Endothelial cell of umbilical vein (primary cell): ENCODE measurements at regions of chr12 and their contacts with region 1.

Region 1: DNA sequence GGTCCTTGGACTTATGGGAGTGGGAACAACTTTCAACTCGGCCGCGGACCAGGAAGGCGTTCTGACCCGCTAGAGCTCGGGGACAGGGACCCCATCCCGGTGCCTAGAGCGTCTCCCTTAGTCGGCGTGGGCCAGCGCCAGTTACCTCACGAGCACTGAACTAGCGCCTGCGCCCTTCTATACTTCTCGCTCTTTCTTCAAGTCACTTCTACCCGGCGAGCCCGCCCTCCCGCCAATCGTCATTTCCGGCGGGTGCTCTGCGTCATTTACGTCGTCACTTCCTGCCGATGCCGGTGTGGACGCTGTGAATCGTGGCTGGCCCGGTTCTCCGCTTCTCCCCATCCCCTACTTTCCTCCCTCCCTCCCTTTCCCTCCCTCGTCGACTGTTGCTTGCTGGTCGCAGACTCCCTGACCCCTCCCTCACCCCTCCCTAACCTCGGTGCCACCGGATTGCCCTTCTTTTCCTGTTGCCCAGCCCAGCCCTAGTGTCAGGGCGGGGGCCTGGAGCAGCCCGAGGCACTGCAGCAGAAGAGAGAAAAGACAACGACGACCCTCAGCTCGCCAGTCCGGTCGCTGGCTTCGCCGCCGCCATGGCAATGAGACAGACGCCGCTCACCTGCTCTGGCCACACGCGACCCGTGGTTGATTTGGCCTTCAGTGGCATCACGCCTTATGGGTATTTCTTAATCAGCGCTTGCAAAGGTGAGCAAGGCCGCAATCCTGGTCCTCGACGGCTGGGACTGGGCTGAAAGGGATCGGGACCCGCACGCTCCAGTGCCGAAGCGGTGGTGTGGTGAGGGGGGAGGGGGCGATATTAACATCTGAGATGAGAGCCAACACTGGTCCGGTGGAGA is at the start of gene STRAP:
- DNase-seq: peak; percentile 99
- H3K4me3 ChIP-seq: peak within 1 kb of the TSS; percentile 59 to 100 (median 94)
- H3K27ac ChIP-seq: peak within 1 kb of the TSS; percentile 97
- H3K4me1 ChIP-seq: peaks cover 24% of the 10 kb centered on the region
- H3K27me3 ChIP-seq: no peaks in the 10 kb centered on the region
- CTCF ChIP-seq: no peak
- POLR2A ChIP-seq: peak; percentile 97
- total RNA-seq, gene STRAP: 138 and 144 TPM in 2 replicates

Region 2: DNA sequence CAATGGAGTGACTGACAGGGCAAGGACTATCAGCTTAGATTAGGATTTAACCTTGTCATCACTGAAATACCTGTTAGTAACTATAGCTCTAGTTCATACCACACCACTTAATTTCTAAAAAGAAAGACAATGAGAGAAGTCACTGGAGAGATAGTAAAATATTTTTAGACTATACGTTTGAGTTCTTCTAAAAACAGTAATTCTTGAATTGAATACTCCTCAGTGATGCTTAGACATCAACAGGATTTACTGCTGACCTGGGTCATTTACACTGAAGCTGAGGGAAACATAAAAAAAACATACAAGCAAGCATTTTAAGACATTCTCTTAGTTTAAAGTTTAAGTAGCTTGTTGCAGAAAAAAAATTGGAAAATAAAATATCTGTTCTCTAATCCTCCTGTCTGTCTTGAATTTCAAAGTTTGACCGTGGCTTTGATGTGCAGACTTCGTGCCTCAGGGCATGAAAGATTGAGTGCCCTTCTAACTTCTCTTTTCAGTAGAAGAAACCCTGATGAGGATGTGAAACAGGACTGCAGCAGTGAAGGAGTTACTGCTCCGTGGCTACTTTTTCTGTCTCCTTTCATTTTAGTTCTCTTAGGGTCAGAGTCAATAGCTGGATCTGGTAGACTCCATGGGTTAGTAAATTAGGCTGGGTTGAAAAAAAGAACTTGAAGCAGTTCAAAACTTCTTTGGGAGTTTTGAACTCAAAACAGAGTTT is 387.9 kb before region 1 on chr12:
- CTCF ChIA-PET with region 1: no interaction called
- POLR2A ChIA-PET with region 1: no interaction called
- dilution Hi-C with region 1: no loop called
- intact Hi-C with region 1: no loop called
- DNase-seq: no peak
- H3K4me3 ChIP-seq: no peak overlapping the region
- H3K27ac ChIP-seq: no peak overlapping the region
- H3K4me1 ChIP-seq: no peaks in the 10 kb centered on the region
- H3K27me3 ChIP-seq: peaks cover 2 to 5% of the 10 kb centered on the region in 2 experiments
- CTCF ChIP-seq: no peak
- POLR2A ChIP-seq: no peak

Region 3: DNA sequence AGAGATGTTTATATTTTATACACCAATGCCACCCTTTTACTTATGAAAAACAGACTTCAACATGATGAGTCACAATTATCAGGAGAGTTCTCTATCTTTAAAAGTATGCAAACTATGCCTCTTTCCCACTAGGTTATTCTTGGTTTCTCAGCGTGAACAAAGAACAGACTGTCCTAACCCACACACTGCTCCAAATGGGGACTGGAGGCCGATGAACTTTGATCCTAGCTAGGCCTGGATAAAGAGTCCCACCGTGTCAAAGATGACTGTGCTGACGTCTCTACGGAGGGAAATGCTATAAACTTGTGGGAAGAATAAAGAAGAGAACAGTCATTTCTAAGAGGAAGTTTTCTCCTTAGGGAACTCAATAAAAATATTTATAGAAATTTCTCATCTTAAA is 253.2 kb before region 1 on chr12:
- CTCF ChIA-PET with region 1: no interaction called
- POLR2A ChIA-PET with region 1: no interaction called
- dilution Hi-C with region 1: no loop called
- intact Hi-C with region 1: loop called (anchors 2 kb)
- DNase-seq: peak; percentile 90
- H3K4me3 ChIP-seq: no peak overlapping the region
- H3K27ac ChIP-seq: peak overlapping the region; percentile 94
- H3K4me1 ChIP-seq: peaks cover 54% of the 10 kb centered on the region
- H3K27me3 ChIP-seq: no peaks in the 10 kb centered on the region
- CTCF ChIP-seq: no peak
- POLR2A ChIP-seq: no peak

Region 4: GRCh38 chr12:15789220-15790171 is 92.8 kb before region 1 on chr12 and contains the start of gene EPS8:
- CTCF ChIA-PET with region 1: no interaction called
- POLR2A ChIA-PET with region 1: no interaction called
- dilution Hi-C with region 1: no loop called
- intact Hi-C with region 1: loop called (anchors 2 kb)
- DNase-seq: peak; percentile 94
- H3K4me3 ChIP-seq: peak within 1 kb of the TSS; percentile 49 to 83 (median 83)
- H3K27ac ChIP-seq: peak within 1 kb of the TSS; percentile 52
- H3K4me1 ChIP-seq: peaks cover 13% of the 10 kb centered on the region
- H3K27me3 ChIP-seq: no peaks in the 10 kb centered on the region
- CTCF ChIP-seq: no peak
- POLR2A ChIP-seq: peak; percentile 59
- total RNA-seq, gene EPS8: 11.9 and 12.1 TPM in 2 replicates

Region 5: GRCh38 chr12:15819644-15820437 is 62.5 kb before region 1 on chr12:
- CTCF ChIA-PET with region 1: no interaction called
- POLR2A ChIA-PET with region 1: no interaction called
- dilution Hi-C with region 1: no loop called
- intact Hi-C with region 1: no loop called
- DNase-seq: no peak
- H3K4me3 ChIP-seq: no peak overlapping the region
- H3K27ac ChIP-seq: no peak overlapping the region
- H3K4me1 ChIP-seq: no peaks in the 10 kb centered on the region
- H3K27me3 ChIP-seq: no peaks in the 10 kb centered on the region
- CTCF ChIP-seq: no peak
- POLR2A ChIP-seq: no peak

Region 6: GRCh38 chr12:15899282-15899870 is 17.0 kb after region 1 on chr12:
- CTCF ChIA-PET with region 1: interaction called, 46 read pairs
- POLR2A ChIA-PET with region 1: no interaction called
- dilution Hi-C with region 1: no loop called
- intact Hi-C with region 1: no loop called
- DNase-seq: peak; percentile 54
- H3K4me3 ChIP-seq: no peak overlapping the region
- H3K27ac ChIP-seq: no peak overlapping the region
- H3K4me1 ChIP-seq: peaks cover 3% of the 10 kb centered on the region
- H3K27me3 ChIP-seq: no peaks in the 10 kb centered on the region
- CTCF ChIP-seq: peak; percentile 44 to 45
- POLR2A ChIP-seq: no peak

Region 7: DNA sequence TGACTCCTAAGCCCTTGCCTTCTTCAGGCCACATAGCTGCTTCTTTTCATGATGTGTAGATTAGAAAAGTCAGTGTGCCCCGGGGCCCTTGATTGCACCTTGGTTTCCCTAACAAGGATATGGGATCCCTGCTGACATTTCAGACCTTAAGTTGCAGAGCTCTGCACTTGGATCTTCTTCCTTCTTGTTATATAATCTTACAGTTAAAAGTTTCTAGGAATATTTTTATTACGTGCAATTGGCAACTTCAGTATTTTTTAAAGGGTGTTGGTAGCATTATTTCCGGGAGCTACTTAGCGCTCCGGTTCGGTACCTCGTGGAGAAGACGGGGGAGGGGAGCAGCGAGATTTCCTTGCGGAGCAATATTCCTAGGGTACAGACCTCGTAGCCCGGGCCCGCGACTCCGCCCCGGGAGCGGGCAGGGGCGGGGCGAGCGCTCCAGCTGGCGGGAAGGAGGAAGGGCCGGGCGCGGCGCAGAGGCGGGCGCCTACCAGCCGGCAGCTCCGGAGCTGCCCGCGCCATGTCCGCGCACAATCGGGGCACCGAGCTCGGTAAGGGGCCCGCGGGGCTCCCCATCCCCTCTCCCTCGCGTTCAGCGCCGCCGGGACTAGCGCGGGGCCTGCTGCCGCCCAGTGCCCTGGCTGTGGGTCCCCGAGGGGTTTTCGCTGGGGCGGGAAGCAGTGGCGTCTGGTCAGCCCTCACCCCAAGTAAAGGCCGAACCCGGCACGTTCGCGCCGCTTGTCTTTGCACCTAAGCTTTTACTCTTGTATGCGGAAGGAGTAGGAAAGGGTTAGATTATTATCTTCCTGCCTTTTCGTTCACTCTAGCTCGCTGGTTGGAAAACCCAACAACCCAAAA is 28.7 kb after region 1 on chr12 and contains the start of gene DERA:
- CTCF ChIA-PET with region 1: interaction called, 3 read pairs
- POLR2A ChIA-PET with region 1: no interaction called
- dilution Hi-C with region 1: no loop called
- intact Hi-C with region 1: loop called (anchors 1 kb)
- DNase-seq: peak; percentile 85
- H3K4me3 ChIP-seq: peak within 1 kb of the TSS; percentile 80 to 96 (median 90)
- H3K27ac ChIP-seq: peak within 1 kb of the TSS; percentile 98
- H3K4me1 ChIP-seq: peaks cover 17% of the 10 kb centered on the region
- H3K27me3 ChIP-seq: no peaks in the 10 kb centered on the region
- CTCF ChIP-seq: no peak
- POLR2A ChIP-seq: peak; percentile 94
- total RNA-seq, gene DERA: 41.5 and 42.1 TPM in 2 replicates

Region 8: GRCh38 chr12:16347391-16348298 is 465.3 kb after region 1 on chr12 and contains the start of gene MGST1:
- CTCF ChIA-PET with region 1: no interaction called
- POLR2A ChIA-PET with region 1: no interaction called
- dilution Hi-C with region 1: no loop called
- intact Hi-C with region 1: loop called (anchors 10 kb)
- DNase-seq: peak; percentile 67
- H3K4me3 ChIP-seq: peak within 1 kb of the TSS; percentile 86 to 95 (median 87)
- H3K27ac ChIP-seq: peak within 1 kb of the TSS; percentile 70
- H3K4me1 ChIP-seq: peaks cover 27% of the 10 kb centered on the region
- H3K27me3 ChIP-seq: no peaks in the 10 kb centered on the region
- CTCF ChIP-seq: no peak
- POLR2A ChIP-seq: peak; percentile 78
- total RNA-seq, gene MGST1: 170 and 173 TPM in 2 replicates